Left lung (tissue), 14 donors: ENCODE measurements at regions of chr5 and their contacts with region 1.

Region 1: GRCh38 chr5:177327539-177328522 is 16.1 kb upstream of the MXD3 start:
- DNase-seq: peak in 2 of 4 donors; percentile 19 to 51
- ATAC-seq: peak; percentile 66
- H3K4me3 ChIP-seq: no peak overlapping the region
- H3K27ac ChIP-seq: peak overlapping the region; percentile 53 to 54
- H3K4me1 ChIP-seq: peaks cover 0 to 10% of the 10 kb centered on the region in 2 donors
- H3K27me3 ChIP-seq: no peaks in the 10 kb centered on the region
- CTCF ChIP-seq: no peak

Region 2: GRCh38 chr5:177454397-177455035 is 126.7 kb after region 1 on chr5:
- intact Hi-C with region 1: loop called in 1 of 2 experiments (anchors 10 kb)
- DNase-seq: peak; percentile 86 to 98 (median 92)
- ATAC-seq: peak; percentile 78
- H3K4me3 ChIP-seq: peak overlapping the region; percentile 43 to 64
- H3K27ac ChIP-seq: peak overlapping the region; percentile 72 to 80
- H3K4me1 ChIP-seq: peaks cover 8 to 46% of the 10 kb centered on the region in 2 donors
- H3K27me3 ChIP-seq: peaks cover 0 to 48% of the 10 kb centered on the region in 2 donors
- CTCF ChIP-seq: peak; percentile 87 to 98

Region 3: GRCh38 chr5:177620560-177620959 is 292.7 kb after region 1 on chr5:
- intact Hi-C with region 1: no loop called
- DNase-seq: no peak
- ATAC-seq: peak; percentile 57
- H3K4me3 ChIP-seq: no peak overlapping the region
- H3K27ac ChIP-seq: no peak overlapping the region
- H3K4me1 ChIP-seq: no peaks in the 10 kb centered on the region
- H3K27me3 ChIP-seq: no peaks in the 10 kb centered on the region
- CTCF ChIP-seq: no peak